IMR-90 (cell line): ENCODE measurements at regions of chr18 and their contacts with region 1.

Region 1: DNA sequence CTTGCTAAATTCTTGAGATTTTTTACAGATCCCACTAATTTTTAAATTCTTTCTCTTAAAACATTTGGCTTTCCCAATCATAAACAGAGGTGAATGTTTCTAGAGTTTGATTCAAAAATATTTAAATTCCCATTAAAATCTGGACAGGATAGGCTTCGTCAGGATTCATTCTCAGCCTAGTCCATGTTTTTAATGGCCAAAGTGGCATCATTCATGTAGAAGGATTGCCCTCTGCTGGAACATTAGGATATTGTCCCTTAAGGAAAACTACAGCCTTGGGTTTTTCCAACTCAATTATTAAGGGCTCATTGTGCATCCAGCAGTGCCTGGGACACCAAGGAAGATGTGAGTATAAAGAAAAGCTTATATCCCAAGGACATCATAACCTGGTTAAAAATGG is 71.7 kb downstream of the TPGS2 start:
- DNase-seq: peak; percentile 80
- ATAC-seq: peak; percentile 82
- H3K4me3 ChIP-seq: no peak overlapping the region
- H3K27ac ChIP-seq: no peak overlapping the region
- H3K4me1 ChIP-seq: peaks cover 22% of the 10 kb centered on the region
- H3K27me3 ChIP-seq: no peaks in the 10 kb centered on the region
- CTCF ChIP-seq: peak; percentile 86
- POLR2A ChIP-seq: no peak
- RAD21 ChIP-seq: peak; percentile 92

Region 2: GRCh38 chr18:35756506-35757117 is 1000.5 kb before region 1 on chr18:
- CTCF ChIA-PET with region 1: no interaction called
- POLR2A ChIA-PET with region 1: no interaction called
- dilution Hi-C with region 1: no loop called
- in situ Hi-C with region 1: no loop called
- intact Hi-C with region 1: loop called (anchors 10 kb)
- DNase-seq: peak; percentile 59
- ATAC-seq: peak; percentile 84
- H3K4me3 ChIP-seq: no peak overlapping the region
- H3K27ac ChIP-seq: no peak overlapping the region
- H3K4me1 ChIP-seq: no peaks in the 10 kb centered on the region
- H3K27me3 ChIP-seq: peaks cover 32% of the 10 kb centered on the region
- CTCF ChIP-seq: peak; percentile 85
- POLR2A ChIP-seq: peak; percentile 35; the same call in 1 of the 2 replicates
- RAD21 ChIP-seq: peak; percentile 87

Region 3: GRCh38 chr18:36095936-36096519 is 661.1 kb before region 1 on chr18:
- CTCF ChIA-PET with region 1: no interaction called
- POLR2A ChIA-PET with region 1: no interaction called
- dilution Hi-C with region 1: no loop called
- in situ Hi-C with region 1: no loop called
- intact Hi-C with region 1: loop called (anchors 1 kb)
- DNase-seq: peak; percentile 85
- ATAC-seq: peak; percentile 69
- H3K4me3 ChIP-seq: no peak overlapping the region
- H3K27ac ChIP-seq: no peak overlapping the region
- H3K4me1 ChIP-seq: no peaks in the 10 kb centered on the region
- H3K27me3 ChIP-seq: peaks cover 2% of the 10 kb centered on the region
- CTCF ChIP-seq: peak; percentile 73
- POLR2A ChIP-seq: no peak
- RAD21 ChIP-seq: peak; percentile 84

Region 4: GRCh38 chr18:36284671-36285295 is 472.3 kb before region 1 on chr18:
- CTCF ChIA-PET with region 1: no interaction called
- POLR2A ChIA-PET with region 1: no interaction called
- dilution Hi-C with region 1: no loop called
- in situ Hi-C with region 1: loop called (anchors 10 kb)
- intact Hi-C with region 1: loop called (anchors 1 kb)
- DNase-seq: peak; percentile 74
- ATAC-seq: peak; percentile 89
- H3K4me3 ChIP-seq: no peak overlapping the region
- H3K27ac ChIP-seq: no peak overlapping the region
- H3K4me1 ChIP-seq: no peaks in the 10 kb centered on the region
- H3K27me3 ChIP-seq: peaks cover 4% of the 10 kb centered on the region
- CTCF ChIP-seq: peak; percentile 96
- POLR2A ChIP-seq: peak; percentile 59; the same call in 1 of the 2 replicates
- RAD21 ChIP-seq: peak; percentile 98

Region 5: DNA sequence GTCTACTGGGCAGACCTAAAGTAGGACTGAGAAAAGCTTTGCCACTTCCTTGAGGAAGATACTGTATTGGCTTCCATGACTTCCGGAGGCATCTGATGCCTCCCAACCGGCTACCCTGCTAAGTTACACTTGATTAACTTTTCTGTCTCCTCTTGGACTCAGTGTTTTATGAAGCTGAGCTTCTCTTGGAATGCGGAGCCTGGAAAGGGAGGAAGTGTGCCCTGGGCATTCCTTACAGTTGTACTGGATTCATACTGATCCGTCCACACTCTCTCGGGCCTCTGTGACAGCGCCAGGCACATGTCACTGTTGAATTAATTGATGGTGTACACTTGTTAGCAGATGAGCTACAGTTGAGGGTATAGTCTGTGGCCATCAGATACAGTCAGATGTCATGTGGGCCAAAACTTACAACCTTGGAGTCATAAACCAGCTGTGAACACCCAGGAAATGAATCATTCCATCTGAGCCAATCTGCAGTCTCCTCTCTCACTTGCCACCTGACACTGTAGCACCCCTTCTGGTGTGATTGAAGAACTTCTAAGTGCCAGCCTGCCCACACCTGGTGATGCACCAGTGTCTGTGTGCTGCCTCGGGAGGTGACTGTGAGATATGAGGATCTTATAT is 337.1 kb before region 1 on chr18:
- CTCF ChIA-PET with region 1: no interaction called
- POLR2A ChIA-PET with region 1: no interaction called
- dilution Hi-C with region 1: no loop called
- in situ Hi-C with region 1: no loop called
- intact Hi-C with region 1: loop called (anchors 10 kb)
- DNase-seq: peak; percentile 21
- ATAC-seq: no peak; the same call in 1 of the 2 replicates
- H3K4me3 ChIP-seq: no peak overlapping the region
- H3K27ac ChIP-seq: peak overlapping the region; percentile 53; the same call in 1 of the 2 replicates
- H3K4me1 ChIP-seq: peaks cover 15% of the 10 kb centered on the region
- H3K27me3 ChIP-seq: no peaks in the 10 kb centered on the region
- CTCF ChIP-seq: no peak
- POLR2A ChIP-seq: no peak
- RAD21 ChIP-seq: no peak

Region 6: GRCh38 chr18:36680042-36680441 is 77.0 kb before region 1 on chr18:
- CTCF ChIA-PET with region 1: interaction called, 3 read pairs
- POLR2A ChIA-PET with region 1: no interaction called
- dilution Hi-C with region 1: no loop called
- in situ Hi-C with region 1: loop called (anchors 5 kb)
- intact Hi-C with region 1: no loop called
- DNase-seq: no peak
- ATAC-seq: no peak
- H3K4me3 ChIP-seq: no peak overlapping the region
- H3K27ac ChIP-seq: no peak overlapping the region
- H3K4me1 ChIP-seq: peaks cover 8% of the 10 kb centered on the region
- H3K27me3 ChIP-seq: no peaks in the 10 kb centered on the region
- CTCF ChIP-seq: no peak
- POLR2A ChIP-seq: no peak
- RAD21 ChIP-seq: no peak

Region 7: GRCh38 chr18:36714476-36714875 is 42.6 kb before region 1 on chr18:
- CTCF ChIA-PET with region 1: no interaction called
- POLR2A ChIA-PET with region 1: no interaction called
- dilution Hi-C with region 1: no loop called
- in situ Hi-C with region 1: no loop called
- intact Hi-C with region 1: no loop called
- DNase-seq: no peak
- ATAC-seq: no peak
- H3K4me3 ChIP-seq: no peak overlapping the region
- H3K27ac ChIP-seq: no peak overlapping the region
- H3K4me1 ChIP-seq: peaks cover 8% of the 10 kb centered on the region
- H3K27me3 ChIP-seq: no peaks in the 10 kb centered on the region
- CTCF ChIP-seq: peak; percentile 24; the same call in 1 of the 2 replicates
- POLR2A ChIP-seq: no peak
- RAD21 ChIP-seq: 0 out of 2 replicates have a peak, but pooled peaks have one; percentile 13

Region 8: DNA sequence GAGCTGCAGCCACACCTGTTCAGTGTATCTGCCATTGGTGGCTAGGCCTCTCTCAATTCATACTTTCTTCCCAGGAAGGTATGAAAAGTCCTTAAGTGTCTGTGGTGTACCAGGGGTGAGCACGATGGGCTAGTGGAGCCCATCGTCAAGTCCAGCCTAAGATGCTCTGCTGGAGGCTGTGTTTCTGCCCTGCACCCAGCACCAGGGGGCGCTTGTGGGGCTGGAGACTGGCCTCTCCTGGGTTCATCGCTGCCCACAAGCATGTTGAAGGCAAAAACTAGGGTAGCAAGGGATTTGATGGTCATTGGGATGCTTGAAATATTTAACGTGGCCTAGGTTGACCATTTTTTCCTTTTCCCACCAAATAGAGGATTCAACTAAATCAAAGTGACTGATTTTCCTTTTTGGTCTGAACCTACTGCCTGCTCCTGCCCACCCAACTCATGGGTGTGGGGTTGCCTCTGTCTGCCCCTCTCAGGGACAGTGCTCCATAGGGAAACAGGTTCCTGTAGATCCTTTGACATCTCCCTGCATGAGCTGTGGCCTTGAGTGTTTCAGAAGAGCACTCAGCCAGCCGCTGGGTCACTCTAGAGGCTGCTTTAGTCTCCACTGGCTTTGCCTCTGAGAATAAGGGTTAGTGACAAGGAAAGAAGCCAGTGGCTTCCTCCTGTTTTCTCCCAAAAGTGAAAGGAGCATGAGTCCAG is 12.7 kb after region 1 on chr18:
- CTCF ChIA-PET with region 1: no interaction called
- POLR2A ChIA-PET with region 1: no interaction called
- dilution Hi-C with region 1: no loop called
- in situ Hi-C with region 1: no loop called
- intact Hi-C with region 1: no loop called
- DNase-seq: no peak
- ATAC-seq: no peak
- H3K4me3 ChIP-seq: no peak overlapping the region
- H3K27ac ChIP-seq: no peak overlapping the region
- H3K4me1 ChIP-seq: peaks cover 14% of the 10 kb centered on the region
- H3K27me3 ChIP-seq: no peaks in the 10 kb centered on the region
- CTCF ChIP-seq: 0 out of 2 replicates have a peak, but pooled peaks have one; percentile 8
- POLR2A ChIP-seq: no peak
- RAD21 ChIP-seq: no peak

Region 9: GRCh38 chr18:36809590-36810381 is 52.7 kb after region 1 on chr18:
- CTCF ChIA-PET with region 1: no interaction called
- POLR2A ChIA-PET with region 1: no interaction called
- dilution Hi-C with region 1: no loop called
- in situ Hi-C with region 1: no loop called
- intact Hi-C with region 1: loop called (anchors 1 kb)
- DNase-seq: peak; percentile 79
- ATAC-seq: peak; percentile 70
- H3K4me3 ChIP-seq: no peak overlapping the region
- H3K27ac ChIP-seq: no peak overlapping the region
- H3K4me1 ChIP-seq: peaks cover 17% of the 10 kb centered on the region
- H3K27me3 ChIP-seq: no peaks in the 10 kb centered on the region
- CTCF ChIP-seq: peak; percentile 75
- POLR2A ChIP-seq: no peak
- RAD21 ChIP-seq: peak; percentile 73